HepG2 (cell line): ENCODE measurements at regions of chr2 and their contacts with region 1.

Region 1: GRCh38 chr2:161223139-161223732 is 63.0 kb downstream of the TANK start:
- DNase-seq: peak; percentile 51
- ATAC-seq: peak; percentile 69
- H3K4me3 ChIP-seq: no peak overlapping the region
- H3K27ac ChIP-seq: no peak overlapping the region
- H3K4me1 ChIP-seq: no peaks in the 10 kb centered on the region
- H3K27me3 ChIP-seq: no peaks in the 10 kb centered on the region
- CTCF ChIP-seq: peak; percentile 61
- EP300 ChIP-seq: no peak
- POLR2A ChIP-seq: no peak
- RAD21 ChIP-seq: peak; percentile 37; the same call in 1 of the 2 replicates

Region 2: GRCh38 chr2:161238560-161239325 is 15.5 kb after region 1 on chr2:
- CTCF ChIA-PET with region 1: no interaction called
- POLR2A ChIA-PET with region 1: no interaction called
- in situ Hi-C with region 1: no loop called
- intact Hi-C with region 1: loop called (anchors 2 kb)
- DNase-seq: no peak
- ATAC-seq: peak; percentile 63
- H3K4me3 ChIP-seq: peak overlapping the region; percentile 55 to 71 (median 58)
- H3K27ac ChIP-seq: no peak overlapping the region
- H3K4me1 ChIP-seq: peaks cover 12% of the 10 kb centered on the region
- H3K27me3 ChIP-seq: peaks cover under 1 to 11% of the 10 kb centered on the region in 2 experiments; a peak in 3 of 5 replicates
- CTCF ChIP-seq: no peak
- EP300 ChIP-seq: no peak
- POLR2A ChIP-seq: no peak
- RAD21 ChIP-seq: no peak; the same call in 1 of the 2 replicates

Region 3: GRCh38 chr2:161250864-161251436 is 27.7 kb after region 1 on chr2:
- CTCF ChIA-PET with region 1: no interaction called
- POLR2A ChIA-PET with region 1: no interaction called
- in situ Hi-C with region 1: no loop called
- intact Hi-C with region 1: loop called (anchors 2 kb)
- DNase-seq: peak; percentile 74
- ATAC-seq: peak; percentile 97
- H3K4me3 ChIP-seq: no peak overlapping the region
- H3K27ac ChIP-seq: no peak overlapping the region
- H3K4me1 ChIP-seq: no peaks in the 10 kb centered on the region
- H3K27me3 ChIP-seq: peaks cover 0 to 2% of the 10 kb centered on the region in 2 experiments; a peak in 2 of 5 replicates
- CTCF ChIP-seq: peak; percentile 89
- EP300 ChIP-seq: no peak
- POLR2A ChIP-seq: no peak
- RAD21 ChIP-seq: peak; percentile 51